GM12878 (cell line): ENCODE measurements at regions of chr14 and their contacts with region 1.

Region 1: GRCh38 chr14:33792720-33793368 is 158.0 kb downstream of the EGLN3 start:
- DNase-seq: peak; percentile 15
- ATAC-seq: peak; percentile 91
- H3K4me3 ChIP-seq: no peak overlapping the region
- H3K27ac ChIP-seq: no peak overlapping the region
- H3K4me1 ChIP-seq: no peaks in the 10 kb centered on the region
- H3K27me3 ChIP-seq: no peaks in the 10 kb centered on the region
- CTCF ChIP-seq: peak; percentile 91 to 95 (median 93); a peak in 5 of 6 replicates
- EP300 ChIP-seq: no peak
- POLR2A ChIP-seq: no peak
- RAD21 ChIP-seq: peak; percentile 86

Region 2: GRCh38 chr14:32710731-32711680 is 1081.8 kb before region 1 on chr14:
- CTCF ChIA-PET with region 1: interaction called, 6 read pairs
- POLR2A ChIA-PET with region 1: no interaction called
- RAD21 ChIA-PET with region 1: interaction called, 4 read pairs
- SMC1A ChIA-PET with region 1: interaction called, 7 read pairs
- in situ Hi-C with region 1: loop called (anchors 5 kb)
- intact Hi-C with region 1: loop called (anchors 1 kb)
- DNase-seq: no peak
- ATAC-seq: peak; percentile 77
- H3K4me3 ChIP-seq: no peak overlapping the region
- H3K27ac ChIP-seq: no peak overlapping the region
- H3K4me1 ChIP-seq: peaks cover 7% of the 10 kb centered on the region
- H3K27me3 ChIP-seq: no peaks in the 10 kb centered on the region
- CTCF ChIP-seq: peak; percentile 46 to 61 (median 55); a peak in 5 of 6 replicates
- EP300 ChIP-seq: no peak
- POLR2A ChIP-seq: no peak
- RAD21 ChIP-seq: peak; percentile 83

Region 3: DNA sequence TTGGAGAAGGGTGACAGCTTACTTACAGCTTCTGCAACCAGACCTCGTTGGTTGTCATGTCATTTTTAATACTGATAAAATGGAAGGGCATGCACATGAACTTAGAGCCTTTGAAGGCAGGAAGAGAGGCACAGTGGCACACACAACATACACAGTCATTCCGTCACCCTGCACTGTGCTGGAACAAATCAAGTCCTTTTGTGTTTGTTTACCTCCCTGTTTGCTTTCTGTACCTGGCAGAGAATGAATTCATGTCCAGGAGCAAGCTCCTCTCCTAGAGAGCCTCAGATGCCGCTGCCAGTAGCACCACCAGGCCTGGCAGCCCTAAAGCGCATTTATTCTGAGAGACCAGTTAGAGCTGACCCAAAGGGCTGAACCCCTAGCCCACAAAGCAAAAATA is 302.3 kb before region 1 on chr14:
- CTCF ChIA-PET with region 1: interaction called, 12 read pairs
- POLR2A ChIA-PET with region 1: no interaction called
- RAD21 ChIA-PET with region 1: interaction called, 4 read pairs
- SMC1A ChIA-PET with region 1: interaction called, 5 read pairs
- in situ Hi-C with region 1: no loop called
- intact Hi-C with region 1: no loop called
- DNase-seq: no peak
- ATAC-seq: no peak
- H3K4me3 ChIP-seq: no peak overlapping the region
- H3K27ac ChIP-seq: no peak overlapping the region
- H3K4me1 ChIP-seq: no peaks in the 10 kb centered on the region
- H3K27me3 ChIP-seq: no peaks in the 10 kb centered on the region; a peak in 1 of 4 replicates
- CTCF ChIP-seq: no peak
- EP300 ChIP-seq: no peak
- POLR2A ChIP-seq: no peak
- RAD21 ChIP-seq: no peak

Region 4: DNA sequence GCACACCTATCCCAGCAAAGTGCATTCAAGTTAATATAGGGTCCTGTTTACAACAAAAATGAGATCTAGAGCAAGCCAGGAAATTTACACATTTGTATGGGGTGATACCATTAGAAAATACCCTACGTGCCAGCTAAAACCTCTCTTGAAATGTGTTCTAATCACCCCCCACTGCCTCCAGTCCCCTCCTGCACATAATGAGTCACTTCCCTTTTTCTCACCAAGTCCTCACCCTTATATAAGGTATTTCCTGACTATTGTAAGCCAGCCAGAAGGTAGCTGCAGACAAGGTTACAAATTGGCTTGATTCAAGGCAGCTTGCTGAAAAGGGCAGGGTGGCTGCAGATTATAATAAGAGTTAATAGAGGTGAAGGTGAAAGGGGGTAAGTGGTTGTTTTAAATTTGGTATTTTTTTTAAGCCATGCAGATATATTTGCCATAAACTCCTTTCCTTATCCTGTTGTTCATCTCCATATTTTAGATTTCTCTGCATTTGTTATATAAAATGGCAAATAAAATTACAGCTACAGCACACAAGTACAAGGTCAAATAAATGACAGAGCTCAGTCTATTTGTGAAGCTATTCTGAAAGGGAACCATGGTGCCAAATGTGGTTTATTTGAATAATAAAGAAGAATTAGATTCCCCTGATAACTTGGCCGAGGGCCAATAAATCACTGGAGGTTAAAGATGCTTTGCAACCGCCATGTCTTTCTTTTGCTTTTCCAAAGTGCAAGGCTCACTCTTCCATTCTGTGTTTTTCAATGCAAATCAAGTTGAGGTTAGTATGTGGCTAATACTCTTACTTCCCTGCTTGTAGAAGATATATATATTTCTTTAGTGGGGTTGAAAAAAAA is 227.8 kb before region 1 on chr14:
- CTCF ChIA-PET with region 1: interaction called, 7 read pairs
- POLR2A ChIA-PET with region 1: no interaction called
- RAD21 ChIA-PET with region 1: interaction called, 29 read pairs
- SMC1A ChIA-PET with region 1: interaction called, 26 read pairs
- in situ Hi-C with region 1: no loop called
- intact Hi-C with region 1: no loop called
- DNase-seq: peak; percentile 57
- ATAC-seq: peak; percentile 92
- H3K4me3 ChIP-seq: no peak overlapping the region
- H3K27ac ChIP-seq: no peak overlapping the region
- H3K4me1 ChIP-seq: no peaks in the 10 kb centered on the region
- H3K27me3 ChIP-seq: peaks cover 0 to 3% of the 10 kb centered on the region in 2 experiments; a peak in 1 of 4 replicates
- CTCF ChIP-seq: no peak
- EP300 ChIP-seq: peak in 1 of 2 experiments; percentile 70; a peak in 1 of 4 replicates
- POLR2A ChIP-seq: no peak
- RAD21 ChIP-seq: no peak

Region 5: GRCh38 chr14:33692762-33693161 is 100.1 kb before region 1 on chr14:
- CTCF ChIA-PET with region 1: interaction called, 13 read pairs
- POLR2A ChIA-PET with region 1: interaction called, 7 read pairs
- RAD21 ChIA-PET with region 1: interaction called, 3 read pairs
- SMC1A ChIA-PET with region 1: interaction called, 4 read pairs
- in situ Hi-C with region 1: no loop called
- intact Hi-C with region 1: no loop called
- DNase-seq: no peak
- ATAC-seq: no peak
- H3K4me3 ChIP-seq: no peak overlapping the region
- H3K27ac ChIP-seq: no peak overlapping the region
- H3K4me1 ChIP-seq: no peaks in the 10 kb centered on the region
- H3K27me3 ChIP-seq: no peaks in the 10 kb centered on the region
- CTCF ChIP-seq: no peak
- EP300 ChIP-seq: no peak
- POLR2A ChIP-seq: no peak
- RAD21 ChIP-seq: no peak

Region 6: DNA sequence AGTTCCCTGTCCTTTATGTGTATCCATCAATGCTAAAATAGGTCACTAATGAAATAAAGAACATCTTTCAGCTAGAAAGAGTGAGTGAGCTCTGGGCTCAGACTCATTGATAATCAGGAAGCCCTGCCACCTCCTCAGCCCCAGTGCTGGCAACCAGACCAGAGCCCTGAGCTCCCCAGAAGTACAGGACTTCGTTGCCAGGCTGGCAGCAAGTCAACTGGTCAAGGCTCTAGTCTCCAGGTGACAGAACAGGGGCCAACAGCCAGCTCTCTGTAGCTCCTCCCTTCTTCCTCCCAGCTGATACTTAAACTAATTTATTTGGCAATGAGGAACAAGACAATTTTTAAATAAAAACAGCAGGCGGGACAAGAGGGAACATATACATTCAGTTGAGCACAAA is 12.7 kb after region 1 on chr14:
- CTCF ChIA-PET with region 1: interaction called, 31 read pairs
- POLR2A ChIA-PET with region 1: interaction called, 3 read pairs
- RAD21 ChIA-PET with region 1: interaction called, 16 read pairs
- SMC1A ChIA-PET with region 1: interaction called, 16 read pairs
- in situ Hi-C with region 1: no loop called
- intact Hi-C with region 1: no loop called
- DNase-seq: no peak
- ATAC-seq: no peak
- H3K4me3 ChIP-seq: no peak overlapping the region
- H3K27ac ChIP-seq: no peak overlapping the region
- H3K4me1 ChIP-seq: no peaks in the 10 kb centered on the region
- H3K27me3 ChIP-seq: no peaks in the 10 kb centered on the region
- CTCF ChIP-seq: no peak
- EP300 ChIP-seq: no peak
- POLR2A ChIP-seq: no peak
- RAD21 ChIP-seq: no peak